RWPE1 (cell line): ENCODE measurements at regions of chr5 and their contacts with region 1.

Region 1: DNA sequence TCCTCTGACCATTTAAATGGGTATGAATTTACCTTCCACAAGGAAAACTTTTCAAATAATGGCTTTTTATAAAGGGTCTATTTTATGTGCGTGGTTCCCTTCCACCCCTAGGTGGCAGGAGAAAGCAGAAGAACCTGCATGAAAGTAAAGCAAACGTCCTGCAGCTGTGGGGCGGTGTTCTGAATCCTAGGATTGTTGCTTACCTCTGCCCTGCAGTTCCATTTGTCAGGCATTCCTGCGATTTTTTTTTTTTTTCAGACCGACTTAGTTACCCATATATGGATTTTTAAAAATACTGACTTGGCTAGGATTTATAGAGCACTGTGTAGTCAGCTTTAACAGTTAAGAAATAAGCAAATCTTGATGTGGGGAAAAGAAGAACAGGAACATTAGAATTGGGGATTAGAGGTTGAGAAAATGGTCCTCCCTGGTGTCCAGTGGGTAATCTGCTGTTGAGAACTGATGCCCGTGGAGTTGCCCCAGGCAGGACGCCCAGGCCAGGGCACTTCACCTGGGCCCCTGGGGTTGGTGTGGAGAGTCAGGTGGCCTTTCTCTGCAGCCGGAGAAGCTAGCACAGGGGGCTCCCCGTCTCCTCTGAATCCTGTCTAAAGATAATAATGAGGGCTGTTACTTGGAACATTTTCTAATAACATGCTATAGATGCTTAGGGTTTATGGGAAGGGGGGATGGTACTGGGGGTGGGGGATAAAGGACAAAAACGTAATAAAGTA is 30.4 kb upstream of the LTC4S start:
- DNase-seq: peak; percentile 90
- H3K27ac ChIP-seq: peak overlapping the region; percentile 82
- CTCF ChIP-seq: peak; percentile 98

Region 2: DNA sequence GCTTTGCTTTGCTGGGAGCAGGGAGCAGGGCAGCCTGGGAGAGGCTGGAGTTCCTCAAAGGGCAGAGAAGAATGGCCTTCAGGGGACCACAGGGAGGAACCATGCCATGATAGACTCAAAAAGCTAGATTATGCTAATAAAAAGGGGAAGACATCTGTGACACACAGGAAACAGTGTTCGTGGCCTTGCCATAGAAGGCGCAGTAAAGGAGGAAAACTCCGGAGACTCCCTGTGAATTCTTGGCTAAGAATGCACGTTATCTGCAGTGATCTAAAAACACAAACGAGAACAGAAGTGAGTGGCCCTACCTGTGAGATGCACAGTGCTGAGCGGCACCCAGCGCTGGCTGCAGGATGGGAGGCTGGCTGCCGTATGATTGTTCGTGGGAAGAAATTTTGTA is 14.5 kb after region 1 on chr5:
- CTCF ChIA-PET with region 1: interaction called, 11 read pairs
- POLR2A ChIA-PET with region 1: no interaction called
- DNase-seq: no peak
- H3K27ac ChIP-seq: no peak overlapping the region
- CTCF ChIP-seq: no peak

Region 3: GRCh38 chr5:179795863-179796833 is 32.8 kb after region 1 on chr5:
- CTCF ChIA-PET with region 1: interaction called, 39 read pairs
- POLR2A ChIA-PET with region 1: interaction called, 3 read pairs
- DNase-seq: peak; percentile 80
- H3K27ac ChIP-seq: peak overlapping the region; percentile 86
- CTCF ChIP-seq: peak; percentile 95

Region 4: DNA sequence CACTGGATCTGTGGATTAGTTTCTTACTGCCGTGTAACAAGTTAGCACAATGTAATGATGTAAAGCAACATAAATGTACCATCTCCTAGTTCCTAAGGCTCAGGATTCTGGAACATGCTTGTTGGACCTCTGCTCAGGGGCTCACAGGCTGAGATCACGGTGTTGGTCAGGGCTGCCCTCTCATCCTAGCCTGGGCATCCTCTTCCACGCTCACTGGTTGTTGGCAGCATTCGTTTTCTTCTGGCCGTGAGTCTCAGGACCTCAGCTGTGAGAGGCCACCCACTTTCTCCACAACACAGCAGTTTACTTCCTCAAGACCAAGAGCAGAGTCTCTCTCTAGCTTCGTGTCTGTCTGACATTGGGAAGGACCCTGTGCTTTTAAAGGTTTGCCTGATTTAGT is 428.3 kb after region 1 on chr5:
- CTCF ChIA-PET with region 1: no interaction called
- POLR2A ChIA-PET with region 1: no interaction called
- DNase-seq: no peak
- H3K27ac ChIP-seq: no peak overlapping the region
- CTCF ChIP-seq: no peak

Region 5: GRCh38 chr5:180353048-180353979 is 589.9 kb after region 1 on chr5 and contains the start of gene GFPT2:
- CTCF ChIA-PET with region 1: no interaction called
- POLR2A ChIA-PET with region 1: no interaction called
- DNase-seq: peak; percentile 97
- H3K27ac ChIP-seq: no peak within 1 kb of the TSS
- CTCF ChIP-seq: no peak